ENCODE measurements at regions of chr11 and their contacts with region 1.

Region 1: DNA sequence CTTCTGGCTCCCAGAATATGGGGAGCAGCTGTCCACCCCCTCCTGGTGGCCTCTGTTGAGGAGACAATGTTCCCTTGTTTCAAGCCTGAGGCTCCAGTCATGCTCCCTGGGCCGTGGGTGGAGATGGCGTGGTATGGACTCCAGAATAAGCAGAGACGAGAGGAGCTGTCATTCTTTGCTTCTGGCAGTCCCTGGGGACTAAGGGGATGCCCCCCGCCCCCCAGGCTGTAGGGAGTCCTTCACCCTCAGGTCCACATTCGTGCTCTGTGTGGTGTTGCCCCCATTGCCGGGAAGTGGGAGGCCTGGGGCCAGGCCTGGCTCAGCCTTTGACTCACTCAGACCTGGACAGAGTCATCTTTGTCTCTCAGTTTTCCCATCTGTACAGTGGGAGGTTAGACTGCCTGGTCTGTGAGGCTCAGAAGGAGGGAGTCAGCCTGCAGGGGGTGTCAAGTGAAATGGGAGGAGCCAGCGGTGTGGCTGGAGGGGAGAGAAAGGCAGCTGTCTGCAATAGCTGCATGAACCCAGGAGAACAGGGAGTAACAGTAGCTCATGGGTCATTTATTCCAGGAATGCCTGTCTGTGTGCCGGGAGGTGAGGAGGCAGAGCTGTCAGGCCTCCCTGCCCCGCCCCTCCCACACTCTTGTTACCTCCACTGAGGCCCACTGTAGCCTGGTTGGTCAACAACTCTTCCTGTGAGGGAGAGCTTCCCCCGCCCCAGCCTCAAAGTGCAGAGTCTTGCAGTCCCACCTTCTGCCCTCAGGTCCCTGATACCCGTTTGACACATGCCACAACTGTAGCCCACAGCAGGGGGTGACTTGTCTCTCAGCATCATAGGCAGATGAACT is 6.3 kb downstream of the ARHGEF17 start:
- DNase-seq: no peak
- H3K4me3 ChIP-seq: peak overlapping the region; percentile 81
- CTCF ChIP-seq: peak; percentile 8

Region 2: DNA sequence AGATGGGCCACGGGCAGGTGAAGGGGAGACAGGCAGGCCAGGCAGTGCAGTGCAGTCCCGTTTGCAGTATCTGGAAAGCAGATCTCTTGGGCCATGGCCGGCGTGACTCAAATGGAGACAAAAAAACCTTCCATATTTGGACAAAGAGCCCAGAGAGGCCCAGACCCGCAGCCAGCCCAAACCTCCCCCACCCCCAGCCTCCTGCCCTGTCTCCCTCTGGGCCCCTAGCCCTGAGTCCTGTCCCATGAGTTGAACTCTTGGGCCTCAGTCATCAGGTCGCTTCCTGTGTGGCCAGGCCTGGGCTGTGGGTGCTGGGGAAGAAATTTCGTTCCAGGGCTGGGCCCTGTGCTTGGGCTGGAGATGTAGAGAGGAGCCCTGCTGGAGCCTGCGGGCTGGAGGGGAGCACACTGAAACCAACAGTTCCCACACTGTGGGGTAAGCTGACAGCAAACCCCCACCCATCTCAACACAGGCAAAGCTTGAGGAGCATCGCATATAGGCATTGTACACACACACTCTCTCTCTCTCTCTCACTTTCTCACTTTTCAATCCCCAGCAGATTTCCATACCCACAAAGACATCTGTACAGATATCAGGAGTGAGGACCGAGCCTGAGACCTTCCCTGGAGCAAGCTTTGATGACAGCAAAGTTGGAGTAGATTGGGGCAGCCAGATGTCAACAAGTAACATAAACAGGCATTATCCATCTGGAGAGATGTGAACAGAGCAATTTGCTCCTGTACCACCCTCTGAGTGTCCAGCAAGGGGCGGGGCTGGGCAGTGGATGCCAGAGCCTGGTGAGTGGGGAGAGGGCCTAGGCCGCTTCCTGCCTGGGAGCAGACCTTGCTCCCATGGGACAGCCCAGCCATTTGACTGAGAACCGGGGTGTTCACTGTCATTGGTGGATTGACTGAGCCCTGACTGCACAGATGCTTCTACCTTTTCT is 11.0 kb after region 1 on chr11:
- CTCF ChIA-PET with region 1: interaction called, 252 read pairs
- POLR2A ChIA-PET with region 1: interaction called, 47 read pairs
- DNase-seq: no peak
- H3K4me3 ChIP-seq: no peak overlapping the region
- CTCF ChIP-seq: no peak

Region 3: GRCh38 chr11:73439002-73439843 is 124.9 kb after region 1 on chr11:
- CTCF ChIA-PET with region 1: no interaction called
- POLR2A ChIA-PET with region 1: no interaction called
- DNase-seq: no peak
- H3K4me3 ChIP-seq: no peak overlapping the region
- CTCF ChIP-seq: no peak

Measured in AG04449 (cell line).